ENCODE measurements at regions of chr9 and their contacts with region 1.

Region 1: GRCh38 chr9:87678650-87679515 is 47.0 kb upstream of the CTSL start:
- DNase-seq: peak in 1 of 2 donors; percentile 47
- ATAC-seq: peak in 3 of 4 donors; percentile 52 to 68 (median 60)
- H3K4me3 ChIP-seq: no peak overlapping the region
- H3K27ac ChIP-seq: no peak overlapping the region
- H3K4me1 ChIP-seq: no peaks in the 10 kb centered on the region
- H3K27me3 ChIP-seq: no peaks in the 10 kb centered on the region
- CTCF ChIP-seq: peak; percentile 83

Region 2: DNA sequence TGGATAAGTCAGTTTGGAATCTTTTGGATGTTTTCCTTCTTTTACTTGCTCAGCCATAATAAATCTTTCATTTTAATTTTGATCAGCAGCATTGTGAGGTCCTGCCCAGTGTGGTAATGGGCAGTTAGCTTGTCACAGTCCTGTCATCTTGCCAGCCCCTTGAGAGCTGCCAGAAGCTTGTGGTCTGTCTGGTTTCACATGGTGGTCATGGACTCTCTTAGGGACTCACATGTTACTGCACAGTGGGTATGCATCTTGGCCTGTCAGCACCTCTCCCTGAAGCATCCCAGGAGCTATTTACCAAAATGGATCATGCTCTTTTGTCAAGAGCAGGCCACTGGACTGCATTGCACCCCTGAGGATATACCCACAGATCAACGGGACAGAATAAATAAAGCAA is 120.9 kb before region 1 on chr9:
- intact Hi-C with region 1: no loop called
- DNase-seq: no peak
- ATAC-seq: no peak
- H3K4me3 ChIP-seq: no peak overlapping the region
- H3K27ac ChIP-seq: no peak overlapping the region
- H3K4me1 ChIP-seq: no peaks in the 10 kb centered on the region
- H3K27me3 ChIP-seq: no peaks in the 10 kb centered on the region
- CTCF ChIP-seq: no peak

Region 3: GRCh38 chr9:87693986-87694755 is 15.3 kb after region 1 on chr9:
- intact Hi-C with region 1: loop called in 1 of 2 experiments (anchors 2 kb)
- DNase-seq: no peak
- ATAC-seq: no peak
- H3K4me3 ChIP-seq: no peak overlapping the region
- H3K27ac ChIP-seq: no peak overlapping the region
- H3K4me1 ChIP-seq: no peaks in the 10 kb centered on the region
- H3K27me3 ChIP-seq: no peaks in the 10 kb centered on the region
- CTCF ChIP-seq: no peak

Region 4: GRCh38 chr9:87713278-87713987 is 34.5 kb after region 1 on chr9:
- intact Hi-C with region 1: no loop called
- DNase-seq: peak; percentile 92 to 93
- ATAC-seq: peak; percentile 84 to 92 (median 92)
- H3K4me3 ChIP-seq: peak overlapping the region; percentile 6
- H3K27ac ChIP-seq: peak overlapping the region; percentile 79
- H3K4me1 ChIP-seq: peaks cover 13% of the 10 kb centered on the region
- H3K27me3 ChIP-seq: no peaks in the 10 kb centered on the region
- CTCF ChIP-seq: no peak

Region 5: DNA sequence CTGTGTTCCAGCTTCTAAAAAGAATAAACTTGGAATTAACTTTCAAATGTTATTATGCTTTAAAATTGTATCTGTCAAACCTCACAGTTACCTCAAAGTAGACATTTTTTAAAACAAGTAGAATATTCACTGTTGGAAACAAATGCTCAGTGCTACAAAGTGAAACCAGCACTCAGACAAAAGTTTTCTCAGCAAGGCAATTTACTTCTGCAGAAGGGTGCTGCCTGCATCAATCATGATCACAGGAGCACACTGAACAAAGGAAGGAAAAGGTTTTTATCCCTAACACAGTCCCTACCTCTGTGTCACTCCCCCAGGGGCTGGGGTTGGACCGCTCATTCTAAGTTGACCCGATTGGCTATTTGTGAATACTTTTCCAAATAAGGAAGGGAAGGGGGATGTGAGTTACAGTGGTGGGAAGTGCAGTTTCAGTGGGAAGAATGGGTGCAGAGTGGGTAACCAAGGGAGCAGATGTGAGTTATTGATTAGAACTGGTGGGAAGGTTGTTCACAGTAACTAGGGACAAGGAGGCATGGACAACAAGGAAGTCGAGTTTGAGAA is 358.5 kb after region 1 on chr9:
- intact Hi-C with region 1: loop called in 1 of 2 experiments (anchors 10 kb)
- DNase-seq: no peak
- ATAC-seq: no peak
- H3K4me3 ChIP-seq: no peak overlapping the region
- H3K27ac ChIP-seq: no peak overlapping the region
- H3K4me1 ChIP-seq: no peaks in the 10 kb centered on the region
- H3K27me3 ChIP-seq: no peaks in the 10 kb centered on the region
- CTCF ChIP-seq: no peak

Region 6: DNA sequence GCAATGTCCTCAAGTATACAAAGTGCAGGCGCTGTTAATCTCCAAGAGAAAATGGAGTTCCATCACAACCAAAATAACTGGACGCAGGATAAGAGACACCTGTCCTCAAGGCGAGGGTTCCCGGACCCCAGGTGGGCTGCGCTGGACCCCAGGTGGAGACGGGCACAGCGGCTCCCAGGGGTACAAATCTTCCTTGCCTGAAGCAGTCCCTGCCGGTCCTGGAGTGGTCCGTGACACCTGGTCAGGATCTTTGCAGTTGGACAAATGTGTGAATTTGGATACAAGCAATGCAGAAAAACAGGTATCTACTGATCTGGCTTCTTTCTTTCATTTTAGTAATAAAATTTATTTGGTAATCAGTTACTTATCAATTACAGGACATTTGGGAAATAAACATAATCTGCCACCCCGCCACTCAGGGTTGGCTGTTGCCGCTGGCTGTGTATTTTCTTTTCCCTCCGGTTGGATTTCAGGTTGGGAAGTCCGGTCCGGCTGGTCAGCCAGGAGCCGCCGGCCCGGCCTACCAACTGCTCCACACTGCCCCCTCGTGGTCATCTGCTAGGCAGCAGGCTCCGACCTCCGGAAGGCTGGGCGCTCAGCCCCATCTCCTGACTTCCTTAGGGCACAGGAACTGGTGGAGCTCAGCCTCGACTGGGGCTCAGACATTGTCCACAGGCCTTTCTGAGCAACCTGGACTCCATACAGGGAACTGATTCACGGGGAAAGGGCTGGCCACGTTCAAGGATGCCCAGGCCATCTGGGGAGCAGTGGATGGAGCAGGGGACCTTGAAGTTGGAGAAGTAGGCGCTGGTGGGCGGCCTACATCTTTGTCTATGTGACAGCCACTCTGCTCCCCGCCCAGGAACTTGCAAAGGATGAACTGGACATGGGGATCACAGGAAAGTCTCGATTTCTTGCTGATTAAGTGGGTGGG is 899.5 kb after region 1 on chr9:
- intact Hi-C with region 1: loop called (anchors 2 to 5 kb)
- DNase-seq: peak; percentile 75 to 86
- ATAC-seq: peak; percentile 65 to 86 (median 78)
- H3K4me3 ChIP-seq: no peak overlapping the region
- H3K27ac ChIP-seq: no peak overlapping the region
- H3K4me1 ChIP-seq: peaks cover 4% of the 10 kb centered on the region
- H3K27me3 ChIP-seq: peaks cover 0 to under 1% (median 0%) of the 10 kb centered on the region in 3 donors
- CTCF ChIP-seq: peak; percentile 92

Region 7: DNA sequence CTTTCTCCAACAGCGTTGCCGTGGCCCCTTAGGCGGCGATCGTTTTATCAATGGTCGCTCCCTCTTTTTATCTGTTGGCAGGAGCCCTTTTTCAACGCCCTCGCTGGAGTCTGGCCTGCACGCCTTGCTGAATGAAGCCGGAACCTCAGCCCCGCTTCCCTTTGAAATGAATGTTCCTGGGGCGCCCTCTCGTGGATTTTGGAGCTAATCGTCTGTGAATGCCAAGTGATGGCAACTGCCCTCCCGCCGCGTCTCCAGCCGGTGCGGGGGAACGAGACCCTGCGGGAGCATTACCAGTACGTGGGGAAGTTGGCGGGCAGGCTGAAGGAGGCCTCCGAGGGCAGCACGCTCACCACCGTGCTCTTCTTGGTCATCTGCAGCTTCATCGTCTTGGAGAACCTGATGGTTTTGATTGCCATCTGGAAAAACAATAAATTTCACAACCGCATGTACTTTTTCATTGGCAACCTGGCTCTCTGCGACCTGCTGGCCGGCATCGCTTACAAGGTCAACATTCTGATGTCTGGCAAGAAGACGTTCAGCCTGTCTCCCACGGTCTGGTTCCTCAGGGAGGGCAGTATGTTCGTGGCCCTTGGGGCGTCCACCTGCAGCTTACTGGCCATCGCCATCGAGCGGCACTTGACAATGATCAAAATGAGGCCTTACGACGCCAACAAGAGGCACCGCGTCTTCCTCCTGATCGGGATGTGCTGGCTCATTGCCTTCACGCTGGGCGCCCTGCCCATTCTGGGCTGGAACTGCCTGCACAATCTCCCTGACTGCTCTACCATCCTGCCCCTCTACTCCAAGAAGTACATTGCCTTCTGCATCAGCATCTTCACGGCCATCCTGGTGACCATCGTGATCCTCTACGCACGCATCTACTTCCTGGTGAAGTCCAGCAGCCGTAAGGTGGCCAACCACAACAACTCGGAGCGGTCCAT is 1322.4 kb after region 1 on chr9:
- intact Hi-C with region 1: loop called in 1 of 2 experiments (anchors 5 kb)
- DNase-seq: peak; percentile 86 to 89
- ATAC-seq: peak; percentile 36 to 80 (median 64)
- H3K4me3 ChIP-seq: no peak overlapping the region
- H3K27ac ChIP-seq: no peak overlapping the region
- H3K4me1 ChIP-seq: no peaks in the 10 kb centered on the region
- H3K27me3 ChIP-seq: peaks cover 0 to 16% (median 0%) of the 10 kb centered on the region in 3 donors
- CTCF ChIP-seq: peak; percentile 61